Transverse colon (tissue), 4 donors: ENCODE measurements at regions of chr20 and their contacts with region 1.

Region 1: DNA sequence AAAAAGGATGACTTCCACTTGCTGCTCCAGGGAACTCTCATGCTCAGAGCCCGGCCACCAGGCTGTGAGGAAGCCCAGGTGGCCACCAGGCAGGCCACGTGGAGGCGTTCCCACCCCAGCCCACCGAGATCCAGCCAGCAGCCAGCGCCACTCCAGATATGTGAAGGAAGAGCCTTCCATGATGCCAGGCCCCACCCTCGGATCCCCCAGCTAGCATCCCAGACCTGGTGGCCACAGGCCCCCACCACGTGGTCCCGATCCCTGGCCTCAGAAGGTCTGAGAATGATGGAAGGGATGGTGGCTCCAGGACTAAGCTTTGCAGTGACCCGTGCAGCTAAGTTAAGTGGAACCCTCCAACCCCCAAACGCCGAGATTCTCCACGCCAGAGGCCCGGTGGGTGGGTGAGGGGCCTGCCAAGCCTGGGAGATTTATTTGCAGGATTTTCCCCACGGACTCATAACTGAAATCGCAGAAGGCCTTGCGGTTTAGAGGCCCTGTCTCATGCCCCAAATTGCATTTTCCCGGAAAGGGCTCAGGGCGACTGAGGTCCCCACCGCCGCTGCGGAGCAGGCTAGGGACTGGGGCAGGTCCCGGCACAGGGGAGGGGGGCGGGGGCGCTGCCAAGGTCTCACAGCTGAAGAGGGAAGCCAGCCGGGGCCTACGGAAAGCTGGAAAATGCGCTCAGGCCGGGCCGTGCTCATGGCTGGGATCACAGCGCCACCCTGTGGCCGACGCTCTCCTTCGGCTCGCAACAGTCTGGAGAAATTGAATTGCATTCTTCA is 31.1 kb upstream of the CST7 start:
- DNase-seq: peak; percentile 68
- H3K4me3 ChIP-seq: no peak overlapping the region
- H3K27ac ChIP-seq: no peak overlapping the region
- H3K4me1 ChIP-seq: peaks cover 0 to 10% (median 5%) of the 10 kb centered on the region in 4 donors
- H3K27me3 ChIP-seq: no peaks in the 10 kb centered on the region
- CTCF ChIP-seq: peak; percentile 76 to 87 (median 83)
- EP300 ChIP-seq: no peak
- POLR2A ChIP-seq: no peak

Region 2: DNA sequence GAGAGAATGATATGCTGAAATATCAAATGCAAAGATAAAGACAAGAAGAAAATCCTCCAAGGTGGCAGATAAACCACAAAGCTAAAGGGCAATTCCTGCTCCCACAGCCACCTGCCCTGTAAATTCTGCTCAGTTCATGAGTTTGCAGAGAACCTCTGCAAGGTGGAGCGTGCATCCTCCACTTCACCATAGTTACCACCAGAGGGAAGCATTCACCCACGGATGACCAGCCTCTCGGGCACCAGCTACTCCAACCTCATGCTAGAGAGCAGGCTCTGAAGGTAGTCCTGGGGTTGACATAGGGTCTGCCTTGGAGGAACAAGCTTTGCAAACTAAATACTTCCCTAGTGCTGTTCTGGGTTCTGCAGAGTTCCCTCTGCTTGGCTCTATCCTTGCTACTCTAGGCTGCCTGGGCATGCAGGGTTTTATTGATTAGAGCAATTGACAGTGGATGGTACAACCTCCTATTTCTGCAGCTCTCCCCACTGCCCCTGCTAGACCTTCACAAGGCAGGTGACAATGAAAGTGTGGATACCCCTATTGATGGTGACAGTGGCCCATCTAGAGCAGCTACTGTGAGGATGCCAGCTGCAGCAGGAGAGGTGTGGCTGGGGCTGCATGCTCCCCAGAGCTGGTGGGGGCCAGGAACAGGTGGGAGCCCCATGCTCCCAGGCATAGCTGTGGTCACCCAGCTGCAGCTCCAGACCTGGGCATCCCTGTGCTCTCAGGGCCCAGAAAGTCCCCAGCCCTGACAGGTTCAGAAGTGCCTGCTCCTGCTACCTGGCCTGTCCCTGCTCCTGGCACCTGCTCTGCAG is 980.5 kb before region 1 on chr20:
- in situ Hi-C with region 1: loop called in 1 of 4 experiments (anchors 25 kb)
- intact Hi-C with region 1: no loop called
- DNase-seq: peak; percentile 30
- H3K4me3 ChIP-seq: no peak overlapping the region
- H3K27ac ChIP-seq: no peak overlapping the region
- H3K4me1 ChIP-seq: no peaks in the 10 kb centered on the region
- H3K27me3 ChIP-seq: no peaks in the 10 kb centered on the region
- CTCF ChIP-seq: peak; percentile 58 to 72 (median 64)
- EP300 ChIP-seq: no peak
- POLR2A ChIP-seq: no peak

Region 3: GRCh38 chr20:24160563-24161375 is 757.2 kb before region 1 on chr20:
- in situ Hi-C with region 1: loop called in 3 of 4 experiments (anchors 10 to 25 kb)
- intact Hi-C with region 1: loop called (anchors 5 kb)
- DNase-seq: peak; percentile 13
- H3K4me3 ChIP-seq: no peak overlapping the region
- H3K27ac ChIP-seq: no peak overlapping the region
- H3K4me1 ChIP-seq: peaks cover 0 to 4% (median 0%) of the 10 kb centered on the region in 4 donors
- H3K27me3 ChIP-seq: no peaks in the 10 kb centered on the region
- CTCF ChIP-seq: peak; percentile 44 to 67 (median 54)
- EP300 ChIP-seq: no peak
- POLR2A ChIP-seq: no peak

Region 4: DNA sequence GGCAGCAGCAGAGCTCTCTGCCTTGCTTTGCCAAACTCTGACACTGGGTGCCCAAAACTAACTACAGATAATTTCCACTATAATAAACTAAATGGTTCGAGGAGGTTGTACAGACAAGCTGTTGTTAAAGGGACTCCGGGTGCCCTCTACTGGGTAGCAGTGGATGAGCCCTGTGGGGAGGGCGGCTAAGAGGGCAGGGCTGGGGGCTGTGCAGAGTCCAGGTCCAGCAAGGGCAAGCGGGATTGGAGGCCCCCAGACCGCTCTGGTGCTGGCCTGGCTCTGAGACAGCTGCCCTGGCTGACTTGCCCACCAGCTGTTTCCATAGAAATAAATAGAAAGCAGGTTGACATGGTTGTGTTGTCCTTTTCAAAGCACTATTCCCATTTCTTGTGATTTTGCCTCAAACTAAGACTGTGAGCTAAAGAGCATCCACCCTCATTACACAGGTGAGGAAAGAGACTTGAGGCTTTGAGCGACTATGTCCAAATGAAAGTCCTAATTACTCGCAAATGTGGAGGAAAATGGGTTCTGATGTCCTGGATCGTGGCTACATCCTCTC is 136.5 kb before region 1 on chr20:
- in situ Hi-C with region 1: loop called in 1 of 4 experiments (anchors 25 kb)
- intact Hi-C with region 1: no loop called
- DNase-seq: no peak
- H3K4me3 ChIP-seq: no peak overlapping the region
- H3K27ac ChIP-seq: no peak overlapping the region
- H3K4me1 ChIP-seq: no peaks in the 10 kb centered on the region
- H3K27me3 ChIP-seq: peaks cover 2% of the 10 kb centered on the region
- CTCF ChIP-seq: peak in 3 of 5 experiments; percentile 19 to 34 (median 21)
- EP300 ChIP-seq: no peak
- POLR2A ChIP-seq: no peak